A549 (cell line): ENCODE measurements at regions of chr1 and their contacts with region 1.

Region 1: GRCh38 chr1:225474986-225475820 is 47.4 kb upstream of the LBR start:
- DNase-seq: peak; percentile 64 to 74
- ATAC-seq: peak; percentile 82 to 91
- H3K4me3 ChIP-seq: 0 out of 3 replicates have a peak overlapping the region, but pooled peaks have one; percentile 3
- H3K27ac ChIP-seq: peak overlapping the region; percentile 68 to 78
- H3K4me1 ChIP-seq: peaks cover 8% of the 10 kb centered on the region; the same call in 2 of the 3 replicates
- CTCF ChIP-seq: peak; percentile 100
- EP300 ChIP-seq: no peak
- POLR2A ChIP-seq: no peak
- RAD21 ChIP-seq: peak; percentile 100

Region 2: DNA sequence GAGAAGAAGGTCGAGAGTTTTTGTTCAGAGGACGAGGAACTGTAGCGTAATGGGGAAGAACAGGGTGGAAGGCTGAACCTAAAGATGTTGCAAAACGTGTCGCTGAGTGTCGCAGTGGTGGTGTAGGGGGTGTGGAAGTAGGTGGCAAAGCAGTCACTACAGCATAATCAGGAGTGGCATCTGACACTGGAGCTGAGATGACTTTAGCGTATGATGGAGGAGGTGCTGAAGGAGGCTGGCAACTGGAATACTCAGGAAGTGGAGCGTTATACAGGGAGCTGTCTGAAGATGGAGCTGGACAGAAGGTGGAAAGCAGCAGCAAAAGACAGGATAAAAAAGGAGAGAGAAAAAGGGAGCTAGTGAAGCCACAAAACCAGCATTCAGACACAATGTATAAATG is 42.5 kb after region 1 on chr1:
- CTCF ChIA-PET with region 1: interaction called, 10 read pairs
- POLR2A ChIA-PET with region 1: no interaction called
- DNase-seq: peak in 1 of 2 experiments; percentile 48
- ATAC-seq: peak; percentile 66 to 73
- H3K4me3 ChIP-seq: no peak overlapping the region
- H3K27ac ChIP-seq: no peak overlapping the region
- H3K4me1 ChIP-seq: peaks cover 54% of the 10 kb centered on the region
- CTCF ChIP-seq: no peak
- EP300 ChIP-seq: no peak
- POLR2A ChIP-seq: no peak
- RAD21 ChIP-seq: peak in 1 of 2 experiments; percentile 15; a peak in 1 of 5 replicates

Region 3: DNA sequence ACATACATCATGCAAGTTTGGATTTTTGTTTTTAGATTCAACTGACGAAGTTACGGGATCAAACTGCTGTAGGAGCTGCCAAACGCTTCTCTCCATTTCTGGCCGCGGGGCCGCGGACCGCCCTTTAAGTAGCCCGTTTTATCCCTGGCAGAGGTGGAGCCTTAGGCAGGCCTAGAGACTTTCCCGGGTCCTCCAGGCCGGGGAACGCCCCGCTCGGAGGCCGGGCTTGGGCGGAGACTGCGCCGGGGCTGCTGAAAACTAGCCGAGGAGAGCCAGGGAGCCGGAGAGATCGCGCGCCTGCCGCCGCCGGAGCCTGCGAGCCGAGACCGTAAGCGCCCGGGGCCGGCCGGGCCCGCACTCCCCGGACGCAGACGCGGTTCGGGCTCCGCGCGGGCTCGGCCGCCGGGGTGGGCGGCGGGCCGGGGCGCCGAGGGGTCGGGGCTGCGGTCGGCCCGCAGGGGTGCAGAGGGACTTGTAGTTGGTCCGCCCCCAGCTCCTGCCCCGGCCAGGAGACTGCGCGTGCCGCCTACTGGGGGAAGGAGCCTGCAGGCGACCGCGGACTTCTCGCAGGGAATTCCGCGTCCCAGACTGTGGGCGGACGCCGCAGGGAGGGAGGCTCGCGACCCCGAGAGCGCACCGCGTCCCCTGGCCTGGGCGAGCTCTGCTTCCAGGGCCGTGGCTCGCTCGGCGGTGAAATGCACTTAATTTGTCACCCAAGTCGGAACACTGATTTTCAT is 334.8 kb after region 1 on chr1 and contains the start of gene EPHX1:
- CTCF ChIA-PET with region 1: interaction called, 77 read pairs
- POLR2A ChIA-PET with region 1: no interaction called
- DNase-seq: peak; percentile 87 to 97
- ATAC-seq: peak; percentile 85 to 86
- H3K4me3 ChIP-seq: peak within 1 kb of the TSS; percentile 86
- H3K27ac ChIP-seq: peak within 1 kb of the TSS; percentile 93 to 99
- H3K4me1 ChIP-seq: peaks cover 40% of the 10 kb centered on the region
- CTCF ChIP-seq: peak; percentile 30; the same call in 2 of the 3 replicates
- EP300 ChIP-seq: 0 out of 5 replicates have a peak, but pooled peaks of 1 of the 2 experiments have one; percentile 8
- POLR2A ChIP-seq: peak; percentile 97
- RAD21 ChIP-seq: peak; percentile 25 to 37; a peak in 3 of 5 replicates
- polyA plus RNA-seq, gene EPHX1: 150 and 212 TPM in 2 replicates

Region 4: GRCh38 chr1:225851805-225852204 is 376.6 kb after region 1 on chr1:
- CTCF ChIA-PET with region 1: interaction called, 69 read pairs
- POLR2A ChIA-PET with region 1: no interaction called
- DNase-seq: no peak
- ATAC-seq: no peak
- H3K4me3 ChIP-seq: no peak overlapping the region
- H3K27ac ChIP-seq: no peak overlapping the region
- H3K4me1 ChIP-seq: no peaks in the 10 kb centered on the region
- CTCF ChIP-seq: no peak
- EP300 ChIP-seq: no peak
- POLR2A ChIP-seq: no peak
- RAD21 ChIP-seq: no peak

Region 5: GRCh38 chr1:225911191-225912130 is 436.3 kb after region 1 on chr1:
- CTCF ChIA-PET with region 1: interaction called, 196 read pairs
- POLR2A ChIA-PET with region 1: no interaction called
- DNase-seq: peak; percentile 54 to 74
- ATAC-seq: peak; percentile 86 to 96
- H3K4me3 ChIP-seq: peak overlapping the region; percentile 29
- H3K27ac ChIP-seq: peak overlapping the region; percentile 62 to 79
- H3K4me1 ChIP-seq: 0 out of 3 replicates have a peak, but pooled peaks cover 3% of the 10 kb centered on the region
- CTCF ChIP-seq: peak; percentile 99
- EP300 ChIP-seq: no peak
- POLR2A ChIP-seq: no peak
- RAD21 ChIP-seq: peak; percentile 73 to 95

Region 6: DNA sequence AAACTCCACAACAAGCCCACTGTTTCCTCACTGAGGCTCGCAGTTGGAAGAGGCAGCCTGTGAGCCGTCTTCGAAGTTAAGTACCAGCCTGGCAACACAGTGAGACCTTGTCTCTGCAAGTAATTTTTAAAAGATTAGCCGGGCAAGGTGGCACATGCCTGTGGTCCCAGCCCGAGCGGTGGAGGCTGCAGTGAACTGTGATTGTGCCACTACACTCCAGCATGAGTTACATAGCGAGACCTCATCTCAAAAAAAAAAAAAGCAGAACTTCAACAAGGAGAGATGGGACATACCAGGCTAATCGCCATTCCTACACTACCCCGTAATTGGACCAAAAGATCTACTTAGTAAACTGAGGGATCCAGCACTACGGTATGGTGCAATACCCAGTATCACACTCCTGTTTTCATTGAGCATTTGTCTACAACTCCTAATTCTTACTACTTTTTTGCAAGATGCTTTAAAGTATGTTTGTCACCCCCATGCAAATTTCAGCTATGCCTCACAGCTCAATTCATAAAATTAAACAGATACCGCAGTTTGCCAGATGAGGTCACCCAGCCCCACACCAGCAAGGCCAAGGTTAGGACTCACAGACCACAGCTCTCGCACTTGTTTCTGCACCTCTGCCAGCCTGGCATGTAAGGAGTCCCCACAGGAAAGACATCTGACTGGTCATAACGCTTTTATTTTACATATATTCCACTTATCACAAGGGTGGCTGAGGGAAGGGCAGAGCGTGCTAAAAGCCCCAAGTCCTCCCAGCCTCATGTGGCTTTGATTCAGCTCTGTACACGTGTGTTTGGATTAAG is 502.9 kb after region 1 on chr1:
- CTCF ChIA-PET with region 1: interaction called, 227 read pairs
- POLR2A ChIA-PET with region 1: no interaction called
- DNase-seq: no peak
- ATAC-seq: 0 out of 6 replicates have a peak, but pooled peaks of 1 of the 2 experiments have one; percentile 27
- H3K4me3 ChIP-seq: no peak overlapping the region
- H3K27ac ChIP-seq: no peak overlapping the region
- H3K4me1 ChIP-seq: no peaks in the 10 kb centered on the region
- CTCF ChIP-seq: no peak
- EP300 ChIP-seq: no peak
- POLR2A ChIP-seq: no peak
- RAD21 ChIP-seq: no peak